CD4-positive, alpha-beta memory T cell (primary cell): ENCODE measurements at regions of chr1 and their contacts with region 1.

Region 1: GRCh38 chr1:25608488-25609178 is 8.0 kb upstream of the MAN1C1 start:
- DNase-seq: peak; percentile 81 to 90 (median 84)
- H3K4me3 ChIP-seq: peak overlapping the region in 1 of 2 donors; percentile 32
- H3K4me3 Mint-ChIP-seq: peak overlapping the region in 7 of 8 donors; percentile 17 to 73 (median 30)
- H3K27ac ChIP-seq: no peak overlapping the region
- H3K27ac Mint-ChIP-seq: peak overlapping the region in 5 of 7 donors; percentile 10 to 92 (median 61)
- H3K4me1 ChIP-seq: peaks cover 8% of the 10 kb centered on the region
- H3K4me1 Mint-ChIP-seq: peaks cover 10 to 13% (median 12%) of the 10 kb centered on the region in 4 donors
- H3K27me3 ChIP-seq: no peaks in the 10 kb centered on the region
- H3K27me3 Mint-ChIP-seq: peaks cover 0 to 2% of the 10 kb centered on the region in 2 donors

Region 2: DNA sequence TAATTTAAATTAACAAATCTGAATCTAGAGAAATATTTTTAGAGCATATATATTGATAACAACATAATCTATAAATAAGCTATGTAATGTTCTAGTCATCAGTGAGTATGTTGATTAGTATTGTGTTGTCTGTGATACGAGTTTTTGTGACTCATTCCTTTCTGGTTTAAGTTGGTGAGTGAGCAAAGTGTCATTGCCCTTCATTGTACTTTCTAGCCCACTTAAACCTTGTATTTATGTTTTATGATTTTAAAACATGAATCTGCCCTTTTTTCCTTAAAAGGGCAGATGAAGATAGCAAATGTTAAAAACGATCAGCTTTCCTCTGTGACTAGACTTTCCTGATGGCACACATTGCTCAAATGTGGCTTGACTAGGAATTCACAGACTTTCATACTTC is 139.5 kb before region 1 on chr1:
- CTCF ChIA-PET with region 1: no interaction called
- POLR2A ChIA-PET with region 1: no interaction called
- intact Hi-C with region 1: no loop called
- DNase-seq: no peak
- H3K4me3 ChIP-seq: no peak overlapping the region
- H3K4me3 Mint-ChIP-seq: no peak overlapping the region
- H3K27ac ChIP-seq: no peak overlapping the region
- H3K27ac Mint-ChIP-seq: no peak overlapping the region
- H3K4me1 ChIP-seq: peaks cover 20% of the 10 kb centered on the region
- H3K4me1 Mint-ChIP-seq: peaks cover 31 to 53% (median 47%) of the 10 kb centered on the region in 4 donors
- H3K27me3 ChIP-seq: no peaks in the 10 kb centered on the region
- H3K27me3 Mint-ChIP-seq: no peaks in the 10 kb centered on the region

Region 3: DNA sequence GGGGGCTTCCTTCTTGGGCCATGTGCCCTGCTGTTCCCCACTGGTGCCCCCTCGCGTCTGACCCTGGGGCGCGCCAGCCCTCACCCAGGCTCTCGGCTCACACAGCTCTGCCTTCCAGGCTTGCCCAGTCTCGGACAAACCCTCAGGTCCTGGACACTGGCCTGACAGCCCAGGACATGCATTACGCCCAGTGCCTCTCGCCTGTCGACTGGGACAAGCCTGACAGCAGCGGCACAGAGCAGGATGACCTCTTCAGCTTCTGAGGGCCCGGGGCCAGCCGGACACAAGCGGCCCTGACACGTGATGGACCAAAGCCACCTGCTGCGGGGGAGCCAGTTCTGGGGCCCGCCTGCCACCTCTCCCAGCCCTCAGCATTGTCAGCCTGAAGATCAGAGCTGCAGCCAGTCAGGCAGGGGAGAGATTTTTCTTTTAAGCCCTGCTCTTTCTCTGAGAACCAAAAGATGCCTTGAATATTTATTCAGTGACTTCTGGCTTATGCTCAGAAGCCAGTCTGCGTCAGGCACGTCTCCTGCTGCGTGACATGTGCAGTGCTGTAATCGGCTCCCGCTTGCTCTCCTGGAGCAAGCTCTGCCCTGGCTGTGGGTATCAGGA is 41.8 kb before region 1 on chr1:
- CTCF ChIA-PET with region 1: interaction called, 6 read pairs
- POLR2A ChIA-PET with region 1: interaction called, 15 read pairs
- intact Hi-C with region 1: loop called (anchors 2 kb)
- DNase-seq: peak in 1 of 5 donors; percentile 46
- H3K4me3 ChIP-seq: no peak overlapping the region
- H3K4me3 Mint-ChIP-seq: peak overlapping the region in 5 of 8 donors; percentile 13 to 88 (median 68)
- H3K27ac ChIP-seq: no peak overlapping the region
- H3K27ac Mint-ChIP-seq: peak overlapping the region in 6 of 7 donors; percentile 32 to 95 (median 73)
- H3K4me1 ChIP-seq: peaks cover 76% of the 10 kb centered on the region
- H3K4me1 Mint-ChIP-seq: peaks cover 35 to 93% (median 60%) of the 10 kb centered on the region in 4 donors
- H3K27me3 ChIP-seq: no peaks in the 10 kb centered on the region
- H3K27me3 Mint-ChIP-seq: no peaks in the 10 kb centered on the region

Region 4: DNA sequence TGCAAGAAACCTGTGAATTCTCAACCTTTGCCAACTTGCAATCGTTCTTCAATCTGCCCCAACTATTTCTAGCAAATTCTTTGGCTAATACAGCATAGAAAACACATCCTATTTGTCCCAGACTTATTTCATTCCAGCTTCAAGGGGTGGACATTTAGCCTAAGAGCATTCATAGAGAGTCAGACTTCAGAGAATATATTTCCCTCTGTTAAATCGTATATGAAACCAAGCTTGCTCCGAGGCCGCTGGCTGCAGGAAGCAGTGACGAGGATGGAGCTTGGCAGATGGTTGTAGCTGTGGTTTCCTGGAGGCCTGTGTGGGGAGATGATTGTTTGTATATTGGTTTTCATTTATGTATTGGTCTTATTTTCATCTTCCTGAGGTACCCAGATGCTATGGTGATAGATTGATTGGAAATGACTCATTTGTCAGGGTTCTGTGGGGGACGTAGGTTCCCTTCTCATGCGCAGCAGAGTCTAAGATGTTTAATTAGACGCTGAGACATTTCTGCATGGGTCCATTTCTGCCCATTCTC is 34.0 kb after region 1 on chr1:
- CTCF ChIA-PET with region 1: interaction called, 12 read pairs
- POLR2A ChIA-PET with region 1: interaction called, 4 read pairs
- intact Hi-C with region 1: no loop called
- DNase-seq: peak; percentile 84 to 89 (median 86)
- H3K4me3 ChIP-seq: peak overlapping the region in 1 of 2 donors; percentile 16
- H3K4me3 Mint-ChIP-seq: peak overlapping the region; percentile 71 to 92 (median 81)
- H3K27ac ChIP-seq: peak overlapping the region; percentile 54
- H3K27ac Mint-ChIP-seq: peak overlapping the region; percentile 87 to 99 (median 94)
- H3K4me1 ChIP-seq: peaks cover 67% of the 10 kb centered on the region
- H3K4me1 Mint-ChIP-seq: peaks cover 50 to 81% (median 64%) of the 10 kb centered on the region in 4 donors
- H3K27me3 ChIP-seq: no peaks in the 10 kb centered on the region
- H3K27me3 Mint-ChIP-seq: no peaks in the 10 kb centered on the region

Region 5: GRCh38 chr1:25695090-25695770 is 86.6 kb after region 1 on chr1:
- CTCF ChIA-PET with region 1: interaction called, 22 read pairs
- POLR2A ChIA-PET with region 1: no interaction called
- intact Hi-C with region 1: no loop called
- DNase-seq: no peak
- H3K4me3 ChIP-seq: no peak overlapping the region
- H3K4me3 Mint-ChIP-seq: no peak overlapping the region
- H3K27ac ChIP-seq: no peak overlapping the region
- H3K27ac Mint-ChIP-seq: peak overlapping the region in 2 of 7 donors; percentile 15 to 38
- H3K4me1 ChIP-seq: peaks cover 25% of the 10 kb centered on the region
- H3K4me1 Mint-ChIP-seq: peaks cover 22 to 67% (median 29%) of the 10 kb centered on the region in 4 donors
- H3K27me3 ChIP-seq: no peaks in the 10 kb centered on the region
- H3K27me3 Mint-ChIP-seq: no peaks in the 10 kb centered on the region

Region 6: GRCh38 chr1:25786887-25787759 is 178.5 kb after region 1 on chr1:
- CTCF ChIA-PET with region 1: interaction called, 218 read pairs
- POLR2A ChIA-PET with region 1: no interaction called
- intact Hi-C with region 1: no loop called
- DNase-seq: no peak
- H3K4me3 ChIP-seq: no peak overlapping the region
- H3K4me3 Mint-ChIP-seq: no peak overlapping the region
- H3K27ac ChIP-seq: no peak overlapping the region
- H3K27ac Mint-ChIP-seq: peak overlapping the region in 2 of 7 donors; percentile 2 to 61
- H3K4me1 ChIP-seq: no peaks in the 10 kb centered on the region
- H3K4me1 Mint-ChIP-seq: peaks cover 0 to 4% (median 1%) of the 10 kb centered on the region in 4 donors
- H3K27me3 ChIP-seq: no peaks in the 10 kb centered on the region
- H3K27me3 Mint-ChIP-seq: no peaks in the 10 kb centered on the region

Region 7: DNA sequence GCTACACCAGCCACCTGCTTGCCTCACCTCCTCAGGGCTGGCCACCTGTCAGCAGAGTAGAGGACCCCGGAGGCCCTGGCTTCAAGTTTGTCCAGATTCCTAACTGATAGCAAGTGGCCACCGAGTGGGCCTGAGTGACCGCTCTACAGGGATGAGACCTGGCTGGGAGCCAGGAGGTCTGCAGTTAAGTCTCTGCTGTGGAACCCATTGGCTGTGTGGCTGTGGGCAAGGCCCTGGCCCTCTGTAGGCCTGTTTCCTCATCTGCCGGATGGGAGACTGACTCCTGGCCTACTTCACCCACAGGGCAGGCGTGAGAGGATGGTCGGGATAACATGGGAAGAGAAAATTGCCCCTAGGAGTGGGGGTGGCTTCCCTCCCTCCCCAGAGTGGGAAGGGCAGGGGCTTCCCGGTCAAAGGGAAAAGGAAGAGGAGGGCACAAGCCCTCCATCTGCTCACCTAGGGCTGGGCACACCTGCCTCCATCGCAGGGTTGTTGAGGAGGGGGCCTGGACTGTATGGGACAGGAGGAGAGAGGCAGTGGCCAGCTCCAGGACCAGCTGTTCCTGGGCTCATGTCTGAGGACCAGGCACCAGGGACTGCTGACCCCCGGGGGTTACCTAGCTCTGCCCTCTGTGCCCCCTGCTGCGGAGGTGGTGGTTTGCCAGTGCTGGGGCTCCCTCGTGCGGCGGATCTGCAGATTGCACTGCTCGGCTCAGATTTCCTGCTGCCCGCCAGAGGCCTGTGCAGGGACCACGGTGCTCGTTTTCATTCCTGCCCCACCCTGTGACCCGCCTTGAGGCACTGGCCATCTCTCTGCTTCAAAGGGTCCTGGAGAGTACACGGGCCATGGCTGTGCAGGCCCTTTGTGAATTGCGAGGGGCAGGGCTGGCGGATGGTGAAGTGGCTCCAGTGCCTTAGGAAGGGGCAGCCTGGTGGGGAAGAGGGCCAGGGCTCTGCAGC is 202.0 kb after region 1 on chr1:
- CTCF ChIA-PET with region 1: interaction called, 110 read pairs
- POLR2A ChIA-PET with region 1: interaction called, 6 read pairs
- intact Hi-C with region 1: loop called (anchors 1 kb)
- DNase-seq: peak; percentile 66 to 79 (median 69)
- H3K4me3 ChIP-seq: no peak overlapping the region
- H3K4me3 Mint-ChIP-seq: no peak overlapping the region
- H3K27ac ChIP-seq: no peak overlapping the region
- H3K27ac Mint-ChIP-seq: peak overlapping the region in 3 of 7 donors; percentile 35 to 84 (median 64)
- H3K4me1 ChIP-seq: peaks cover 5% of the 10 kb centered on the region
- H3K4me1 Mint-ChIP-seq: peaks cover 0 to 10% (median 2%) of the 10 kb centered on the region in 4 donors
- H3K27me3 ChIP-seq: no peaks in the 10 kb centered on the region
- H3K27me3 Mint-ChIP-seq: no peaks in the 10 kb centered on the region